Upper lobe of right lung (tissue), 1 donor: ENCODE measurements at regions of chr19 and their contacts with region 1.

Region 1: DNA sequence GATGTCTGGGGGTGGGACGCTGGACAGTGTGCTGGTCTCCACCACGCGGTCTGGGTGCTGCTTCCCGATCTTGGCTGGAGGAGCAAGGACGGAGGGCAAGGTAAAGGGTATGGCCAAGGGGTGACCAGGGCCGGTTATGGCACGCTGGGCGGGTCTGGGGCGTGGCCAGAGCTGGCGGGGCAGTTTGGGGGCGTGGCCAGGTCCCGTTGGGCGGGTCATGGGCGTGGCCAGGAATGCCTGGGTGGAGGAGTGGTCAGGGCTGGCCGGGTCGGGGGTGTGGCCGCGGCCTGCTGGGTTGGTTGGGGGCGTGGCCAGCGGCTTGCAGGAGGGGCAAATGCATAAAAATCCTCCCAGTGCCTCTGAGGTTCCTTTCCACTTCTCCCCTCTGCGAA is 19.2 kb downstream of the GPX4 start:
- DNase-seq: peak; percentile 89
- ATAC-seq: peak; percentile 85
- H3K4me3 ChIP-seq: no peak overlapping the region
- H3K27ac ChIP-seq: no peak overlapping the region
- H3K4me1 ChIP-seq: no peaks in the 10 kb centered on the region
- H3K27me3 ChIP-seq: no peaks in the 10 kb centered on the region
- CTCF ChIP-seq: no peak

Region 2: GRCh38 chr19:1074544-1075283 is 48.3 kb before region 1 on chr19:
- intact Hi-C with region 1: no loop called
- DNase-seq: peak; percentile 97
- ATAC-seq: peak; percentile 78
- H3K4me3 ChIP-seq: peak overlapping the region; percentile 28
- H3K27ac ChIP-seq: peak overlapping the region; percentile 65
- H3K4me1 ChIP-seq: peaks cover 39% of the 10 kb centered on the region
- H3K27me3 ChIP-seq: no peaks in the 10 kb centered on the region
- CTCF ChIP-seq: no peak

Region 3: GRCh38 chr19:1161716-1162115 is 38.7 kb after region 1 on chr19:
- intact Hi-C with region 1: no loop called
- DNase-seq: peak; percentile 88
- ATAC-seq: peak; percentile 57
- H3K4me3 ChIP-seq: no peak overlapping the region
- H3K27ac ChIP-seq: peak overlapping the region; percentile 51
- H3K4me1 ChIP-seq: peaks cover 12% of the 10 kb centered on the region
- H3K27me3 ChIP-seq: no peaks in the 10 kb centered on the region
- CTCF ChIP-seq: no peak

Region 4: DNA sequence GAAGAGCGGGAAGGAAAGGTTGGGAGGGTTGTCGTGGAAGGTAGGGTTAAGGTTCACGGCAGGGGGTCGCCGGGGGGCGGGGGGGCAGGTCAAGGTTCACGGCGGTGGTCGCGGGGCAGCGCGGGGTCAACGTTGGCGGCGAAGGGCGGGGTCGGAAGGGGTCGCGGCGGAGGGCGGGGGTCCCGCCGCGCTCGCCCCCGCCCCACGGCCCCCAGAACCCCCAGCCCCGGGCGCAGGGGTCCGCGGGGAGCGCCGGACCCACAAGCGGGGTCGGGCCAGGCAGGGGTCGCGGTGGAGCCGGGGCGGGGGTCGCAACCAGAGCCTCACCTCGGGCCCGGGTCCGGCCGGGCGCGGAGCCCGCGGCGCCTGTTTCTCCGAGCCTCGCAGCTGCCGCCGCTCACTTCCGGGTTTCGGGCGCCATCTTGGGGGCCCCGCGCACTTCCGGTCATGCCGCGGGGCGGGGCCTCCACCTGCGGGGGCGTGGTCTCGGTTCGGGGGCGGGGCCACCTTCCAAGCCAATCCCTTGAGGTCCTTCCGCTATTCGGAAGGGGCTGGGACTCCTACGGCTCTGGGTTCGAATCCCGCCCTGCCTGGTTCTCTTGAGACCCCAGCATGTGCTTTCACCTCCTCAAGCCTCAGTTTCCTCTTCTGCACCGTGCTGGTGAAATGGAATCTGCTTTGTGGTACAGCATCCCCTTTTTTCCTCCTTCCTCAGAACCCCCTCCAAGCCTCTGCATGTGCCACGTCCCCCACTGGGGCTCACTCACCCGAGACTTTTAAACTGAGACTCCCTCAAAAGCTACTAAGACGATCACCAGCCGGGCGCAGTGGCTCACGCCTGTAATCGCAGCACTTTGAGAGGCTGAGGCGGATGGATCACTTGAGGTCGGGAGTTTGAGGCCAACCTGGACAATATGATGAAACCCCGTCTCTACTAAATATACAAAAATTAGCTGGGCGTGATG is 51.2 kb after region 1 on chr19 and contains the start of gene SBNO2:
- intact Hi-C with region 1: loop called (anchors 10 kb)
- DNase-seq: peak; percentile 94
- ATAC-seq: peak; percentile 86
- H3K4me3 ChIP-seq: peak within 1 kb of the TSS; percentile 87
- H3K27ac ChIP-seq: peak within 1 kb of the TSS; percentile 95
- H3K4me1 ChIP-seq: peaks cover 43% of the 10 kb centered on the region
- H3K27me3 ChIP-seq: no peaks in the 10 kb centered on the region
- CTCF ChIP-seq: no peak
- total RNA-seq, gene SBNO2: 125 TPM